ENCODE measurements at regions of chr1 and their contacts with region 1.

Region 1: DNA sequence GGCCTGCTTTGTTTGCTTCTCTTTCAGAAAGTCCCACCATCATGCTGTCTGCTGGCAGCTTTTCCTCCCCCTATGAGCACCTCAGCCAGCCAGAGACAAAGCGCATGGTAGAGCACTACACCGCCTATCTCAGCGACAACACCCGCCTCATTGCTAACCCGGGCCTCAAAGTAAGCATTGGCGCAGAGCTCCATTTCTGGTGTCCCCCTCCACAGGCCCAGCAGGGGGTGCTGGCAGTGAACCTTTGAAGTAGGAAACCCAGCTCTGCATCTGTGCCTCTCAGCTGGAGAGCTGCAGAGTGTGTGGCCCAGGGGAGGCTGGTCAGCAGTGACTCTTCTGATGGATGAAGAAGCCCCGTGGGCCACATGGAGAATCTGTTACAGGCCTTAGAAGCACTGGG is 81.2 kb upstream of the RAVER2 start:
- DNase-seq: no peak

Region 2: GRCh38 chr1:64282354-64282753 is 381.3 kb before region 1 on chr1:
- intact Hi-C with region 1: loop called in 1 of 2 experiments (anchors 10 kb)
- DNase-seq: no peak

Region 3: GRCh38 chr1:64733581-64734286 is 70.1 kb after region 1 on chr1:
- intact Hi-C with region 1: no loop called
- DNase-seq: no peak